ENCODE measurements at regions of chr18 and their contacts with region 1.

Region 1: GRCh38 chr18:58671111-58671631 is at the start of gene MALT1:
- DNase-seq: peak; percentile 87 to 99 (median 96)
- ATAC-seq: peak; percentile 84
- H3K4me3 ChIP-seq: peak within 1 kb of the TSS; percentile 90
- H3K4me3 Mint-ChIP-seq: peak within 1 kb of the TSS; percentile 99
- H3K27ac ChIP-seq: peak within 1 kb of the TSS; percentile 52 to 64
- H3K27ac Mint-ChIP-seq: peak within 1 kb of the TSS; percentile 96
- H3K4me1 ChIP-seq: peaks cover 44% of the 10 kb centered on the region
- H3K4me1 Mint-ChIP-seq: peaks cover 68% of the 10 kb centered on the region
- H3K27me3 ChIP-seq: no peaks in the 10 kb centered on the region
- H3K27me3 Mint-ChIP-seq: no peaks in the 10 kb centered on the region
- CTCF ChIP-seq: no peak
- total RNA-seq, gene MALT1: 82.3 to 84.5 TPM

Region 2: GRCh38 chr18:58541789-58542425 is 129.3 kb before region 1 on chr18:
- CTCF ChIA-PET with region 1: no interaction called
- POLR2A ChIA-PET with region 1: interaction called, 10 read pairs
- intact Hi-C with region 1: no loop called
- DNase-seq: peak in 8 of 14 experiments; percentile 6 to 80 (median 36)
- ATAC-seq: peak; percentile 82
- H3K4me3 ChIP-seq: no peak overlapping the region
- H3K4me3 Mint-ChIP-seq: no peak overlapping the region
- H3K27ac ChIP-seq: no peak overlapping the region
- H3K27ac Mint-ChIP-seq: no peak overlapping the region
- H3K4me1 ChIP-seq: peaks cover 18% of the 10 kb centered on the region
- H3K4me1 Mint-ChIP-seq: peaks cover 27% of the 10 kb centered on the region
- H3K27me3 ChIP-seq: no peaks in the 10 kb centered on the region
- H3K27me3 Mint-ChIP-seq: no peaks in the 10 kb centered on the region
- CTCF ChIP-seq: no peak

Region 3: GRCh38 chr18:58578835-58579560 is 92.2 kb before region 1 on chr18:
- CTCF ChIA-PET with region 1: no interaction called
- POLR2A ChIA-PET with region 1: no interaction called
- intact Hi-C with region 1: no loop called
- DNase-seq: peak in 2 of 14 experiments; percentile 14 to 31
- ATAC-seq: no peak
- H3K4me3 ChIP-seq: no peak overlapping the region
- H3K4me3 Mint-ChIP-seq: no peak overlapping the region
- H3K27ac ChIP-seq: no peak overlapping the region
- H3K27ac Mint-ChIP-seq: no peak overlapping the region
- H3K4me1 ChIP-seq: peaks cover 8% of the 10 kb centered on the region
- H3K4me1 Mint-ChIP-seq: peaks cover 31% of the 10 kb centered on the region
- H3K27me3 ChIP-seq: no peaks in the 10 kb centered on the region
- H3K27me3 Mint-ChIP-seq: no peaks in the 10 kb centered on the region
- CTCF ChIP-seq: no peak

Region 4: DNA sequence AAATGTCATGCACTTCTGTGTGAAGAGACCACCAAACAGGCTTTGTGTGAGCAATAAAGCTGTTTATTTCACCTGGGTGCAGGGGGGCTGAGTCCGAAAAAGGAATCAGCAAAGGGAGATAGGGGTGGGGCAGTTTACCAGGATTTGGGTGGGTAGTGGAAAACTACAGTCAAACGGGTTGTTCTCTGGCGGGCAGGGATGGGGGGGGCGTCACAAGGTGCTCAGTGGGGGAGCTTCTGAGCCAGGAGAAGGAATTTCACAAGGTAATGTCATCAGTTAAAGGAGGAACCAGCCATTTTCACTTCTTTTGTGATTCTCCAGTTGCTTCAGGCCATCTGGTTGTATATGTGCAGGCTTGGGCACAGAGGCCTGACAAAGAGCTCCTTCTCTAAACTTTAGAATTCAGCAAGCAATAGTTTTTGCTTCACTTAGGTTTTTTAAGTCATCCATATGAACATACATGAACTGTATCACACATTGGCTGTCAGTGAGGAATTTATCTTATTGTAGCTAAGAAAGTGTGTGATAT is 24.8 kb before region 1 on chr18:
- CTCF ChIA-PET with region 1: no interaction called
- POLR2A ChIA-PET with region 1: interaction called, 10 read pairs
- intact Hi-C with region 1: no loop called
- DNase-seq: no peak
- ATAC-seq: no peak
- H3K4me3 ChIP-seq: no peak overlapping the region
- H3K4me3 Mint-ChIP-seq: no peak overlapping the region
- H3K27ac ChIP-seq: no peak overlapping the region
- H3K27ac Mint-ChIP-seq: no peak overlapping the region
- H3K4me1 ChIP-seq: peaks cover 18% of the 10 kb centered on the region
- H3K4me1 Mint-ChIP-seq: peaks cover 29% of the 10 kb centered on the region
- H3K27me3 ChIP-seq: no peaks in the 10 kb centered on the region
- H3K27me3 Mint-ChIP-seq: no peaks in the 10 kb centered on the region
- CTCF ChIP-seq: no peak

Region 5: GRCh38 chr18:58687871-58688308 is 16.7 kb after region 1 on chr18:
- CTCF ChIA-PET with region 1: interaction called, 16 read pairs
- POLR2A ChIA-PET with region 1: interaction called, 270 read pairs
- intact Hi-C with region 1: loop called in 1 of 2 experiments (anchors 1 kb)
- DNase-seq: peak; percentile 32 to 92 (median 55)
- ATAC-seq: peak; percentile 93
- H3K4me3 ChIP-seq: peak overlapping the region; percentile 25
- H3K4me3 Mint-ChIP-seq: peak overlapping the region; percentile 86
- H3K27ac ChIP-seq: peak overlapping the region; percentile 62 to 67
- H3K27ac Mint-ChIP-seq: peak overlapping the region; percentile 89
- H3K4me1 ChIP-seq: peaks cover 72% of the 10 kb centered on the region
- H3K4me1 Mint-ChIP-seq: peaks cover 81% of the 10 kb centered on the region
- H3K27me3 ChIP-seq: no peaks in the 10 kb centered on the region
- H3K27me3 Mint-ChIP-seq: no peaks in the 10 kb centered on the region
- CTCF ChIP-seq: no peak

Region 6: GRCh38 chr18:58754544-58755068 is 83.4 kb after region 1 on chr18:
- CTCF ChIA-PET with region 1: no interaction called
- POLR2A ChIA-PET with region 1: interaction called, 12 read pairs
- intact Hi-C with region 1: no loop called
- DNase-seq: peak in 2 of 14 experiments; percentile 21 to 22
- ATAC-seq: peak; percentile 37
- H3K4me3 ChIP-seq: no peak overlapping the region
- H3K4me3 Mint-ChIP-seq: no peak overlapping the region
- H3K27ac ChIP-seq: no peak overlapping the region
- H3K27ac Mint-ChIP-seq: peak overlapping the region; percentile 72
- H3K4me1 ChIP-seq: peaks cover 19% of the 10 kb centered on the region
- H3K4me1 Mint-ChIP-seq: peaks cover 50% of the 10 kb centered on the region
- H3K27me3 ChIP-seq: no peaks in the 10 kb centered on the region
- H3K27me3 Mint-ChIP-seq: no peaks in the 10 kb centered on the region
- CTCF ChIP-seq: no peak

Region 7: GRCh38 chr18:58785171-58785805 is 114.1 kb after region 1 on chr18:
- CTCF ChIA-PET with region 1: no interaction called
- POLR2A ChIA-PET with region 1: no interaction called
- intact Hi-C with region 1: no loop called
- DNase-seq: no peak
- ATAC-seq: no peak
- H3K4me3 ChIP-seq: no peak overlapping the region
- H3K4me3 Mint-ChIP-seq: no peak overlapping the region
- H3K27ac ChIP-seq: no peak overlapping the region
- H3K27ac Mint-ChIP-seq: no peak overlapping the region
- H3K4me1 ChIP-seq: no peaks in the 10 kb centered on the region
- H3K4me1 Mint-ChIP-seq: no peaks in the 10 kb centered on the region
- H3K27me3 ChIP-seq: peaks cover 0 to 6% of the 10 kb centered on the region in 2 experiments
- H3K27me3 Mint-ChIP-seq: peaks cover 37% of the 10 kb centered on the region
- CTCF ChIP-seq: no peak

Region 8: GRCh38 chr18:59358712-59359575 is 687.8 kb after region 1 on chr18 and contains the start of gene LMAN1:
- CTCF ChIA-PET with region 1: no interaction called
- POLR2A ChIA-PET with region 1: no interaction called
- intact Hi-C with region 1: loop called in 1 of 2 experiments (anchors 10 kb)
- DNase-seq: peak; percentile 76 to 95 (median 88)
- ATAC-seq: peak; percentile 75
- H3K4me3 ChIP-seq: peak within 1 kb of the TSS; percentile 85
- H3K4me3 Mint-ChIP-seq: peak within 1 kb of the TSS; percentile 92
- H3K27ac ChIP-seq: peak within 1 kb of the TSS; percentile 83 to 92
- H3K27ac Mint-ChIP-seq: peak within 1 kb of the TSS; percentile 81
- H3K4me1 ChIP-seq: peaks cover 14% of the 10 kb centered on the region
- H3K4me1 Mint-ChIP-seq: peaks cover 46% of the 10 kb centered on the region
- H3K27me3 ChIP-seq: no peaks in the 10 kb centered on the region
- H3K27me3 Mint-ChIP-seq: no peaks in the 10 kb centered on the region
- CTCF ChIP-seq: no peak
- total RNA-seq, gene LMAN1: 23.9 to 26.1 TPM